Brain microvascular endothelial cell (primary cell): ENCODE measurements at regions of chr3 and their contacts with region 1.

Region 1: DNA sequence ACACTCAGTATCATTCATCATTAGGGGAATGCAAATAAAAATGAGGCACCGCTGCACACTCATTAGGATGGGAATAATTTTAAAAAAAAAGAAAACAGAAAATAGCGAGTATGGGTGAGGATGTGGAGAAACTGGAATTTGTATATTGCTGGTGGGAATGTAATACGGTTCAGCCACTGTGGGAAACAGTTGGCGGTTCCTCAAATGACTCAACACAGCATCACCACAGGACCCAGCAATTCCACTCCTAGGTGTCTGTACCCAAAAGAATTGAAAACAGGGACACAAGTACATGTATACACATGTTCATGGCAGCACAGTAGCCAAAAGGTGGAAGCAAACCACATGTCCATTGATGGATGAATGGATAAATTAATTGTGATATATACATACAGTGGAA is 35.2 kb upstream of the RFTN1 start:
- DNase-seq: peak; percentile 79
- H3K4me3 ChIP-seq: no peak overlapping the region
- H3K27ac ChIP-seq: no peak overlapping the region
- H3K27me3 ChIP-seq: no peaks in the 10 kb centered on the region
- CTCF ChIP-seq: no peak

Region 2: GRCh38 chr3:16279010-16279801 is 269.5 kb before region 1 on chr3:
- in situ Hi-C with region 1: loop called (anchors 10 kb)
- DNase-seq: no peak
- H3K4me3 ChIP-seq: no peak overlapping the region
- H3K27ac ChIP-seq: no peak overlapping the region
- H3K27me3 ChIP-seq: no peaks in the 10 kb centered on the region
- CTCF ChIP-seq: no peak